IMR-90 (cell line): ENCODE measurements at regions of chr12 and their contacts with region 1.

Region 1: GRCh38 chr12:100348657-100349454 is 8.0 kb upstream of the SLC17A8 start:
- DNase-seq: peak; percentile 38
- ATAC-seq: peak; percentile 74
- H3K4me3 ChIP-seq: no peak overlapping the region
- H3K27ac ChIP-seq: no peak overlapping the region
- H3K4me1 ChIP-seq: no peaks in the 10 kb centered on the region
- H3K27me3 ChIP-seq: peaks cover 2% of the 10 kb centered on the region; the same call in 1 of the 2 replicates
- CTCF ChIP-seq: peak; percentile 61
- POLR2A ChIP-seq: no peak
- RAD21 ChIP-seq: peak; percentile 70

Region 2: DNA sequence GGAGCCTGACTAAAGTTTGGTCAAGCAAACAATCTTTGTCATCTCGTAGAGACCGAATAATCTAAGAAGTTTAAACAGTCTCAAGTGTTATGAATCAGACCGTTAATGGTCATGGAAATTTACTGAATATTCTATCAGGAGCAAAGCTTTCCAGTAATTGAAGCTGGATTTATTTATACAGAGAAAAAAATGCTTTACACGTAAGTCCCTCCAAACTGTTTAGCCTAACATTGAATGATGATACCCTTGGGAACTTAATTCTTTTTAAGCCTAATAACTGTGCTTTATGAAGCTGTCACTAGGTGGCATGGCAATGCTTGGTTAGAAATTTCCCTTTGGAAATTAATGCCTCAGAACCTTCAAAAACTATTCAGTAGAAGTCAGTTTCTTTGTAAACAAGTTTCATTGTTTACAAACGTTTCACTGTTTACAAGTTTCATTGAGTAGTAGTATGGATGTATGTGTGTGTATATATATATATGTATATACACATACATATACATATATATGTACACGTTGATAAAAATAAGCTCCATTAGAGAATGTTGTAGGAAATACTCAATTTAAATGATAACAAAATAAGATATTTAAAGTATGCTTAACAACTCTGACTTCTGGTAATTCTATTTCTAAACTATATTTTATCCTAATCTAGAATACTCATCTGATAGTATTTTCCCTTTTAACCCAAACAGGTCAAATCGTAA is 114.1 kb before region 1 on chr12:
- CTCF ChIA-PET with region 1: no interaction called
- POLR2A ChIA-PET with region 1: no interaction called
- dilution Hi-C with region 1: no loop called
- in situ Hi-C with region 1: no loop called
- intact Hi-C with region 1: loop called (anchors 1 kb)
- DNase-seq: peak; percentile 86
- ATAC-seq: peak; percentile 94
- H3K4me3 ChIP-seq: no peak overlapping the region
- H3K27ac ChIP-seq: peak overlapping the region; percentile 46; the same call in 1 of the 2 replicates
- H3K4me1 ChIP-seq: peaks cover 3% of the 10 kb centered on the region
- H3K27me3 ChIP-seq: no peaks in the 10 kb centered on the region
- CTCF ChIP-seq: peak; percentile 91
- POLR2A ChIP-seq: no peak
- RAD21 ChIP-seq: peak; percentile 80

Region 3: GRCh38 chr12:100668945-100669536 is 320.2 kb after region 1 on chr12:
- CTCF ChIA-PET with region 1: interaction called, 3 read pairs
- POLR2A ChIA-PET with region 1: no interaction called
- dilution Hi-C with region 1: no loop called
- in situ Hi-C with region 1: no loop called
- intact Hi-C with region 1: loop called (anchors 1 kb)
- DNase-seq: peak; percentile 61
- ATAC-seq: peak; percentile 96
- H3K4me3 ChIP-seq: no peak overlapping the region
- H3K27ac ChIP-seq: no peak overlapping the region
- H3K4me1 ChIP-seq: no peaks in the 10 kb centered on the region
- H3K27me3 ChIP-seq: peaks cover 3% of the 10 kb centered on the region
- CTCF ChIP-seq: peak; percentile 83
- POLR2A ChIP-seq: no peak
- RAD21 ChIP-seq: peak; percentile 68